ENCODE measurements at regions of chr17 and their contacts with region 1.

Region 1: GRCh38 chr17:47229535-47230443 is 20.6 kb downstream of the MYL4 start:
- DNase-seq: peak; percentile 93
- H3K4me3 ChIP-seq: no peak overlapping the region
- H3K27ac ChIP-seq: no peak overlapping the region
- H3K4me1 ChIP-seq: peaks cover 19% of the 10 kb centered on the region
- H3K27me3 ChIP-seq: no peaks in the 10 kb centered on the region
- CTCF ChIP-seq: peak; percentile 89 to 99 (median 97)
- POLR2A ChIP-seq: no peak

Region 2: GRCh38 chr17:47315451-47316266 is 85.9 kb after region 1 on chr17:
- intact Hi-C with region 1: loop called (anchors 10 kb)
- DNase-seq: peak; percentile 51
- H3K4me3 ChIP-seq: no peak overlapping the region
- H3K27ac ChIP-seq: peak overlapping the region in 1 of 2 donors; percentile 8
- H3K4me1 ChIP-seq: peaks cover 3% of the 10 kb centered on the region
- H3K27me3 ChIP-seq: no peaks in the 10 kb centered on the region
- CTCF ChIP-seq: peak; percentile 64 to 74 (median 65)
- POLR2A ChIP-seq: no peak

Region 3: GRCh38 chr17:47330548-47330947 is 100.8 kb after region 1 on chr17:
- intact Hi-C with region 1: no loop called
- DNase-seq: no peak
- H3K4me3 ChIP-seq: no peak overlapping the region
- H3K27ac ChIP-seq: no peak overlapping the region
- H3K4me1 ChIP-seq: no peaks in the 10 kb centered on the region
- H3K27me3 ChIP-seq: no peaks in the 10 kb centered on the region
- CTCF ChIP-seq: no peak
- POLR2A ChIP-seq: no peak

Measured in testis (tissue), 5 donors.